Activated T-helper 2 cell treated with anti-CD3 and anti-CD28 coated beads, Interferon-gamma antibody, Interleukin-2, Interleukin-4, amounts not matched to agents 10 μg/mL and 5 μg/mL and 100 μg/mL, durations not matched to agents 14 hours and 24 hours and 36 hours (primary cell): ENCODE measurements at regions of chrX and their contacts with region 1.

Region 1: GRCh38 chrX:43958529-43958928 is 14.7 kb downstream of the NDP start:
- DNase-seq: no peak
- H3K4me3 Mint-ChIP-seq: no peak overlapping the region
- H3K27ac Mint-ChIP-seq: no peak overlapping the region
- H3K4me1 Mint-ChIP-seq: peaks cover 9% of the 10 kb centered on the region
- H3K27me3 Mint-ChIP-seq: peaks cover 2% of the 10 kb centered on the region

Region 2: GRCh38 chrX:44025555-44025954 is 67.0 kb after region 1 on chrX:
- intact Hi-C with region 1: loop called (anchors 2 kb)
- DNase-seq: no peak
- H3K4me3 Mint-ChIP-seq: no peak overlapping the region
- H3K27ac Mint-ChIP-seq: no peak overlapping the region
- H3K4me1 Mint-ChIP-seq: peaks cover 6% of the 10 kb centered on the region
- H3K27me3 Mint-ChIP-seq: no peaks in the 10 kb centered on the region

Region 3: DNA sequence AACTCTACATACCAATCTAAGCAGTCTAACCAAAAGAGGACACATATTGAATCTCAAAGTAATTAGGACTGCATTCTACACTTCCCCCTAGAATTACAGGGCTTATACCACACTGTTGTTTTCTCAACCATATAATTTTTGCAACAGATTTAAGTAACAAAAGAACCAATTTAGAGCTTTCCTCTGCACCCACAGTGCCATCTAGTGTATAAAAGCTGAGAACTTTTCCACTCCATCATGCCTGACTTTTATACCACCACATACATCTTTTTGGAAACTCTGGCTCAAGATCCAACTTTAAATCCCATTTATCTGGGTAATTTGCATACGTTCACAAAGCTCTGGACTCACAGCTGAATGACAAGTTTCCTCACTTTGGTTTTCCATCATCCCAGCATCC is 285.5 kb after region 1 on chrX:
- intact Hi-C with region 1: loop called (anchors 5 kb)
- DNase-seq: no peak
- H3K4me3 Mint-ChIP-seq: no peak overlapping the region
- H3K27ac Mint-ChIP-seq: no peak overlapping the region
- H3K4me1 Mint-ChIP-seq: peaks cover 1% of the 10 kb centered on the region
- H3K27me3 Mint-ChIP-seq: peaks cover 3% of the 10 kb centered on the region

Region 4: DNA sequence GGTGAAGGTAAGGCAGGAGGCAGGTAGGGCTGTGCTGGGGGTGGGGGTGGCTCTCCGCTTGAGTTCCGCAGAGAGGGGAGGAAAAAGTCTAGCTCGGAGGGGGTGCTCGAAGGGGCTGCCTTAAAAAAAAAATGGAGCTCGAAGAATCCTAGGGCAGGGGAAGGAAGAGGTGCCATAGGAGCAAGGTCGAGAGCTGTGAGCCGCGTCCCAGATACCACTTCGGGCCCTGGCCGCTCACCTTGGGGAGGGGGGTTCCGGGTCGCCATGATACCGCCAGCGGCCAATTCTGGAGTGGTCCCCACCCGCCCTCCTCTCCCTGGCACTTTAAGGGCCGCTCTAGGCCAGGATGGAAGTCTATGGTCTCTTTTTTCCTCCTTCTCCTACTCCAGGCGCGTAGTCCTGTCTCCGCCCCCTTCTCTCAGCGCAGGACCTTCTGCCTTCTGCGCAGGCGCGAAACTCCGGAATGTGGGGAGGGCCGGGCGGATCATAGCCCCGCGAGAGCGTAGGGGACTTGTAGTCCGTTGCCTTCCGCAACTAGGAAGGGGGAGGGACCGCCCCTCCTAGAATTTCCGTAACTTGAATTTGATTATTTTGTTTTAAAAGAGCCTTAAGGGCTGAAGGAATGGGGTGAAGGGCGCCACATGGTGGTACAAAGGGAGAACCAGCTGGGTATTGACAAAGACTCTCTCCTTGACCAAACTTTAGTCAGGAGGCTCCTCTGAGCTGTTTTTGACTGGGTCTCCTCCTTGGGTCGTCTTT is 584.2 kb after region 1 on chrX and contains the start of gene FUNDC1:
- intact Hi-C with region 1: loop called (anchors 2 kb)
- DNase-seq: peak; percentile 84
- H3K4me3 Mint-ChIP-seq: peak within 1 kb of the TSS; percentile 91
- H3K27ac Mint-ChIP-seq: peak within 1 kb of the TSS; percentile 88
- H3K4me1 Mint-ChIP-seq: peaks cover 15% of the 10 kb centered on the region
- H3K27me3 Mint-ChIP-seq: no peaks in the 10 kb centered on the region
- total RNA-seq, gene FUNDC1: 9.0 and 10.9 TPM in 2 replicates